Right ventricle myocardium inferior (tissue), 1 donor: ENCODE measurements at regions of chr11 and their contacts with region 1.

Region 1: DNA sequence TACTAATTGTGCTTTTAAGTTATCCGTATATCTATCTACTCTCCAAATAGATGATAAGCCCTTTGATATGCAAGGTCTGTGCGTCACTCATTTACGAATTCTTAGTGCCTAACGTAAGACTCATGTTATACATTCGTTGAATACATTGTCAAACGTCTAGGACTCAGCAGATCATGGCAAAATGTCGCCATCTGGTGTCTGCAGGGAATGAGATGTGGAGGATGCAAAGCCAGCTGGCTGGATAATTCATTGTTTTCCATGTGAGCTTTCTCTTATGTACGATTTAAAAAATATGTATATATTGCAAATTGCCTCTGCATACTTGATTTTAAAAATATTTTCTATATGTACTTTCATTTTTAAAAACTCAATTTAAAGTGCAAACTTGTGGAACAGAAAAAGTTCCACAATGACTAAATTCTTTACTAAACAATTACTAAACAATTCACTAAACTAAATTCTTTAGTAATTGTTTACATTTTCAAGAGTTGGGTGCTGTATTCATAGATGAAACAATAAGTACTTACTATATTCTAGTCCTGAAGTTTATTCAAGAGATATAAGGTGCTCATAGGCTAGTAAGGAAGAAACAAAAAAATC is 33.8 kb downstream of the ZNF202 start:
- DNase-seq: no peak
- ATAC-seq: no peak

Region 2: GRCh38 chr11:123577081-123577598 is 130.6 kb before region 1 on chr11:
- intact Hi-C with region 1: loop called (anchors 2 kb)
- DNase-seq: peak; percentile 89
- ATAC-seq: peak; percentile 66

Region 3: GRCh38 chr11:123640677-123641494 is 66.8 kb before region 1 on chr11:
- intact Hi-C with region 1: loop called (anchors 1 kb)
- DNase-seq: peak; percentile 71
- ATAC-seq: no peak

Region 4: GRCh38 chr11:123753110-123753509 is 45.4 kb after region 1 on chr11:
- intact Hi-C with region 1: no loop called
- DNase-seq: no peak
- ATAC-seq: no peak